Posterior vena cava (tissue), 2 donors: ENCODE measurements at regions of chr14 and their contacts with region 1.

Region 1: DNA sequence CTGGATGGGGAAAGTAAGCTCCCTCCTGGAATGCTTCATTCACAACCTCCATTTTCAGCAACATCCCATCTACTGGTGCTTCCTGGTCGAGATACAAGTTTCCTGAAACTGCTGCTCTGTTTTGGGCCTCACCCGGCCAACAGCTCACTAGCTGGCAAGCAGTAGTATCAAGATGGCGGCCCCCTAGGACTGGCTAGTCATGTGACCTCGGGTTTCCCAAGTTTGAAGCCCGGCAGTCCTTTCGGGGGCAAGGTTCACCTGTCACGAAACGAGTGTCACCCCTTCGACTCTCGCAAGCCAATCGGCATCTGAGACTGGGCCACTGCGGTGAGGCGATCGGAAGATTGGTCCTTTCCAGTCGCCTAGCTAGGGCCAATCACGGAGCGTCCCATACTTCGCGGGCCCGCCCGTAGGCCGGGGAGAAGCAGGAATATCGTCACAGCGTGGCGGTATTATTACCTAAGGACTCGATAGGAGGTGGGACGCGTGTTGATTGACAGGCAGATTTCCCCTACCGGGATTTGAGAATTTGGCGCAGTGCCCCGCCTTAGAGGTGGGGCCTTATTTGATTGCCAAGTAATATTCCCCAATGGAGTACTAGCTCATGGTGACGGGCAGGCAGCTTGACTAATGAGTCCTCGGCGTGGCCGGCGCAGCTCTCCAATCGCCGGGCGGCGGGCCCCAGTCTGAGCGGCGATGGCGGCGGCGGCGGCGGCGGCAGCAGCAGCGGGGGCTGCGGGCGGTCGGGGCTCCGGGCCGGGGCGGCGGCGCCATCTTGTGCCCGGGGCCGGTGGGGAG is at the start of gene PABPN1:
- DNase-seq: peak; percentile 100
- total RNA-seq, gene PABPN1: 67.9 to 79.0 TPM

Region 2: DNA sequence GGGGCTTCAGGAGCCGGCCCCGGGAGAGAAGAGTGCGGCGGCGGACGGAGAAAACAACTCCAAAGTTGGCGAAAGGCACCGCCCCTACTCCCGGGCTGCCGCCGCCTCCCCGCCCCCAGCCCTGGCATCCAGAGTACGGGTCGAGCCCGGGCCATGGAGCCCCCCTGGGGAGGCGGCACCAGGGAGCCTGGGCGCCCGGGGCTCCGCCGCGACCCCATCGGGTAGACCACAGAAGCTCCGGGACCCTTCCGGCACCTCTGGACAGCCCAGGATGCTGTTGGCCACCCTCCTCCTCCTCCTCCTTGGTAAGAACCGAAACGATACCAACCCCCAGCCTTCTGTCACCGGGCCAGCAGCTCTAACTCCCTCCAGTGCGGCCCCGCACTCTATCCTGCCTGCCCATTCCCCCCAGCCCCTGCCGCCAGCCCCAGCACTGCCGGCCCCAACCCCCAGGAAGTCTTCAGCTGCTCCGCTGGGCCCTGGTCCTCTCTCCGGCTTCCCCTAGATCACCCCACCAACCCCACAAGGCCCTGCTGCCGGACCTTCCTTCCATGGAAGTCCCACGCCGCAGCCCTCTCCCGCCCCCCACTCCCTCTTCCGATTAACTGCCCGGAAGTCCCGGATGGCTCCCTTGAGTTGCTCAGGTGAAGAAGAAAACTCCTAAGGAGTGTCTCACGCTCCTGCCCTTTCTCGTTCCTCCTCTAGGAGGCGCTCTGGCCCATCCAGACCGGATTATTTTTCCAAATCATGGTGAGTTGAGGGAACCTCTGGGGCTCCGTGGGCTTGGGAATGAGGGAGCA is 448.7 kb before region 1 on chr14:
- intact Hi-C with region 1: loop called in 1 of 2 experiments (anchors 5 kb)
- DNase-seq: peak; percentile 93

Region 3: GRCh38 chr14:23446291-23446851 is 125.4 kb after region 1 on chr14:
- intact Hi-C with region 1: loop called in 1 of 2 experiments (anchors 10 kb)
- DNase-seq: peak; percentile 81

Region 4: GRCh38 chr14:23555882-23556699 is 235.1 kb after region 1 on chr14 and contains the start of gene THTPA:
- intact Hi-C with region 1: loop called in 1 of 2 experiments (anchors 10 kb)
- DNase-seq: peak; percentile 98
- total RNA-seq, gene THTPA: 11.6 to 19.6 TPM